ENCODE measurements at regions of chrX and their contacts with region 1.

Region 1: GRCh38 chrX:155056877-155057792 is 13.8 kb downstream of the CMC4 start:
- DNase-seq: peak; percentile 44 to 79
- ATAC-seq: peak; percentile 81 to 95 (median 90)
- H3K4me3 ChIP-seq: peak overlapping the region; percentile 18
- H3K4me3 Mint-ChIP-seq: peak overlapping the region; percentile 64
- H3K27ac ChIP-seq: peak overlapping the region; percentile 26
- H3K27ac Mint-ChIP-seq: peak overlapping the region in 1 of 2 donors; percentile 58
- H3K4me1 ChIP-seq: peaks cover 15% of the 10 kb centered on the region
- H3K4me1 Mint-ChIP-seq: peaks cover 7 to 20% of the 10 kb centered on the region in 2 donors
- H3K27me3 ChIP-seq: no peaks in the 10 kb centered on the region
- H3K27me3 Mint-ChIP-seq: no peaks in the 10 kb centered on the region
- CTCF ChIP-seq: peak; percentile 66

Region 2: GRCh38 chrX:154855256-154855655 is 201.9 kb before region 1 on chrX:
- intact Hi-C with region 1: no loop called
- DNase-seq: no peak
- ATAC-seq: no peak
- H3K4me3 ChIP-seq: no peak overlapping the region
- H3K4me3 Mint-ChIP-seq: no peak overlapping the region
- H3K27ac ChIP-seq: no peak overlapping the region
- H3K27ac Mint-ChIP-seq: no peak overlapping the region
- H3K4me1 ChIP-seq: no peaks in the 10 kb centered on the region
- H3K4me1 Mint-ChIP-seq: no peaks in the 10 kb centered on the region
- H3K27me3 ChIP-seq: no peaks in the 10 kb centered on the region
- H3K27me3 Mint-ChIP-seq: no peaks in the 10 kb centered on the region
- CTCF ChIP-seq: no peak

Region 3: GRCh38 chrX:154918060-154918483 is 139.1 kb before region 1 on chrX:
- intact Hi-C with region 1: loop called (anchors 2 kb)
- DNase-seq: peak in 1 of 2 donors; percentile 61
- ATAC-seq: peak in 2 of 3 donors; percentile 62 to 71
- H3K4me3 ChIP-seq: no peak overlapping the region
- H3K4me3 Mint-ChIP-seq: no peak overlapping the region
- H3K27ac ChIP-seq: no peak overlapping the region
- H3K27ac Mint-ChIP-seq: no peak overlapping the region
- H3K4me1 ChIP-seq: no peaks in the 10 kb centered on the region
- H3K4me1 Mint-ChIP-seq: peaks cover 0 to 6% of the 10 kb centered on the region in 2 donors
- H3K27me3 ChIP-seq: no peaks in the 10 kb centered on the region
- H3K27me3 Mint-ChIP-seq: peaks cover 15 to 23% of the 10 kb centered on the region in 2 donors
- CTCF ChIP-seq: peak; percentile 67

Region 4: GRCh38 chrX:155179346-155179986 is 122.3 kb after region 1 on chrX:
- intact Hi-C with region 1: no loop called
- DNase-seq: peak in 1 of 2 donors; percentile 3
- ATAC-seq: no peak
- H3K4me3 ChIP-seq: no peak overlapping the region
- H3K4me3 Mint-ChIP-seq: no peak overlapping the region
- H3K27ac ChIP-seq: no peak overlapping the region
- H3K27ac Mint-ChIP-seq: no peak overlapping the region
- H3K4me1 ChIP-seq: no peaks in the 10 kb centered on the region
- H3K4me1 Mint-ChIP-seq: no peaks in the 10 kb centered on the region
- H3K27me3 ChIP-seq: no peaks in the 10 kb centered on the region
- H3K27me3 Mint-ChIP-seq: peaks cover 3 to 14% of the 10 kb centered on the region in 2 donors
- CTCF ChIP-seq: no peak